ENCODE measurements at regions of chr14 and their contacts with region 1.

Region 1: GRCh38 chr14:21383848-21384493 is at the start of gene SUPT16H:
- DNase-seq: peak; percentile 98
- H3K4me3 ChIP-seq: peak within 1 kb of the TSS; percentile 61 to 88 (median 72)
- H3K27ac ChIP-seq: peak within 1 kb of the TSS; percentile 87 to 95 (median 90)
- H3K4me1 ChIP-seq: peaks cover 0 to 26% (median 16%) of the 10 kb centered on the region in 4 donors
- H3K27me3 ChIP-seq: no peaks in the 10 kb centered on the region
- CTCF ChIP-seq: no peak
- EP300 ChIP-seq: no peak
- POLR2A ChIP-seq: peak in 1 of 2 donors; percentile 54
- total RNA-seq, gene SUPT16H: 62.0 to 77.1 (median 69.1) TPM

Region 2: DNA sequence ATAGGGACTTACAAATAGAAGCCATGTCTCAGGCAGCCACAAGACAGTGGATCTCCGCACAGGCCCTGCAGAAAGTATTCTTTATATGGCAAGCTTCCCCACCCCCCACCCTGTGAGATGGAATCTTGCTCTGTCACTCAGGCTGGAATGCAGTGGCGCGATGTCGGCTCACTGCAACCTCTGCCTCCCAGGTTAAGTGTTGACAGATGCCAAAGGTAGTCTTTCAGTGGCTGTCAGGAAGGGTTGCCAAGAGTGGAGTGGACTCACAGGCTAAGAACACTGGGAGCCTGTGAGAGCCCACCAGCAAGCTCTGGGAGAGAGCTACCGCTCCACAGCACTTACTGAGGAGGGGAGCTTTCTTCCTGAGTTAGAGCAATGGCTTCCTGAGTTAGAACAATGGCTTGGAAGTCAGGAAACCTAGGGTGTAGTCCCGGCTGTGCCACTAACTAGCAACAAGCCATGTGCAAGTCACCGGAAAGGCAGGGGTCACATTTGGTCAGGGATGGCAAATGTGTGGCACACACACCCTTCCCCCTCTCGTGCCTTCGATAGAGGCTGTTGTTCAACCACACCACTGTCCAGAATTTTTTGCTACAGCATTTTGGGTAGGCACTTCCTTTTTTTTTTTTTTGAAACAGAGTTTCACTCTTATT is 584.0 kb before region 1 on chr14:
- intact Hi-C with region 1: no loop called
- DNase-seq: peak; percentile 72
- H3K4me3 ChIP-seq: peak overlapping the region in 2 of 4 donors; percentile 24 to 42
- H3K27ac ChIP-seq: peak overlapping the region; percentile 56 to 65 (median 60)
- H3K4me1 ChIP-seq: peaks cover 0 to 16% (median 13%) of the 10 kb centered on the region in 4 donors
- H3K27me3 ChIP-seq: no peaks in the 10 kb centered on the region
- CTCF ChIP-seq: no peak
- EP300 ChIP-seq: no peak
- POLR2A ChIP-seq: no peak

Region 3: GRCh38 chr14:21233457-21234076 is 150.4 kb before region 1 on chr14:
- intact Hi-C with region 1: loop called (anchors 10 kb)
- DNase-seq: no peak
- H3K4me3 ChIP-seq: no peak overlapping the region
- H3K27ac ChIP-seq: no peak overlapping the region
- H3K4me1 ChIP-seq: peaks cover 0 to 73% (median 52%) of the 10 kb centered on the region in 4 donors
- H3K27me3 ChIP-seq: no peaks in the 10 kb centered on the region
- CTCF ChIP-seq: no peak
- EP300 ChIP-seq: no peak
- POLR2A ChIP-seq: no peak

Region 4: DNA sequence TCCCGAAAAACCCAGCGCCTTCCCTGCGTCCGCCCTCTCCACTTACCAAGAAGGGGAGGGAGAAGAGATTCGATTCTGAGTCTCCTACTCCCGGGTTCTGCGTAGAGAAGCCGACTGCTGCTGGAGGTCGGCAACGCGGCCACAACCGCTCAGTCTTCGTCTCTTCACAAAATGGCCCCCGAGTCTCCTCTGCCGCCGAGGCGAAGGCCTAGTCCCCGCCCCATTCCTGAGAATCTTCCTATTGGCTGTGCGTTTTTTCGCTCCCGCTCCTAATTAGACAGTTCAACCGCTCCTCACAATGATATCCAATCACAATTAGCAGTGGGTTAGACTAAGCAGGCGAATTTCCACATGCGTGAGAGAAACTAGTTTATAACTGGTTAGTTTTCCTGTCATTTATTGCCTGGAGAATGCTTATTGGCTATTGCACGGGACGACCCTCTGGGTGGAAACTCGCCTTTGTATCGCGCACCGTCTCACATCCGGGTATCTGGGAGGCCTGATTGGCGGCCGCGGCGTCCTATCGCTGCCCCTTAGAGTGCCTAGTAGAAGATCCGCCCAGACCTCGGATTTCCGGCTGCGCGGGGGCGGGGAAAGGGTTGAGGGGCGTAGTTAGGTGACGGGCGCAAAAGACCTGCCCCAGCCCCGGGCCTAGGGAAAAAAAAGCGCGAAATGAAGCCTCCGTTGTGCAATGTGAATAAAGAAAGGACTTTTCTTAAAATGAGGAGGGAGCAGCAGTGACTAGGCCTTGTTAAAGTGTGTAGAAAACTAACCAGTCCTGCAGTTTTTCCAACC is 114.5 kb before region 1 on chr14 and contains the start of gene HNRNPC:
- intact Hi-C with region 1: loop called (anchors 2 kb)
- DNase-seq: peak; percentile 100
- H3K4me3 ChIP-seq: peak within 1 kb of the TSS; percentile 81 to 90 (median 88)
- H3K27ac ChIP-seq: peak within 1 kb of the TSS; percentile 94 to 99 (median 99)
- H3K4me1 ChIP-seq: peaks cover 0 to 45% (median 40%) of the 10 kb centered on the region in 4 donors
- H3K27me3 ChIP-seq: no peaks in the 10 kb centered on the region
- CTCF ChIP-seq: no peak
- EP300 ChIP-seq: peak in 1 of 4 donors; percentile 9
- POLR2A ChIP-seq: peak; percentile 98
- total RNA-seq, gene HNRNPC: 365 to 449 (median 404) TPM

Region 5: GRCh38 chr14:21437063-21437901 is 53.3 kb after region 1 on chr14:
- intact Hi-C with region 1: loop called (anchors 2 kb)
- DNase-seq: peak; percentile 98
- H3K4me3 ChIP-seq: peak overlapping the region; percentile 52 to 89 (median 77)
- H3K27ac ChIP-seq: peak overlapping the region; percentile 85 to 90 (median 86)
- H3K4me1 ChIP-seq: peaks cover 0 to 27% (median 22%) of the 10 kb centered on the region in 4 donors
- H3K27me3 ChIP-seq: no peaks in the 10 kb centered on the region
- CTCF ChIP-seq: no peak
- EP300 ChIP-seq: no peak
- POLR2A ChIP-seq: peak in 1 of 2 donors; percentile 11

Measured in sigmoid colon (tissue), 7 donors.